ENCODE measurements at regions of chr16 and their contacts with region 1.

Region 1: DNA sequence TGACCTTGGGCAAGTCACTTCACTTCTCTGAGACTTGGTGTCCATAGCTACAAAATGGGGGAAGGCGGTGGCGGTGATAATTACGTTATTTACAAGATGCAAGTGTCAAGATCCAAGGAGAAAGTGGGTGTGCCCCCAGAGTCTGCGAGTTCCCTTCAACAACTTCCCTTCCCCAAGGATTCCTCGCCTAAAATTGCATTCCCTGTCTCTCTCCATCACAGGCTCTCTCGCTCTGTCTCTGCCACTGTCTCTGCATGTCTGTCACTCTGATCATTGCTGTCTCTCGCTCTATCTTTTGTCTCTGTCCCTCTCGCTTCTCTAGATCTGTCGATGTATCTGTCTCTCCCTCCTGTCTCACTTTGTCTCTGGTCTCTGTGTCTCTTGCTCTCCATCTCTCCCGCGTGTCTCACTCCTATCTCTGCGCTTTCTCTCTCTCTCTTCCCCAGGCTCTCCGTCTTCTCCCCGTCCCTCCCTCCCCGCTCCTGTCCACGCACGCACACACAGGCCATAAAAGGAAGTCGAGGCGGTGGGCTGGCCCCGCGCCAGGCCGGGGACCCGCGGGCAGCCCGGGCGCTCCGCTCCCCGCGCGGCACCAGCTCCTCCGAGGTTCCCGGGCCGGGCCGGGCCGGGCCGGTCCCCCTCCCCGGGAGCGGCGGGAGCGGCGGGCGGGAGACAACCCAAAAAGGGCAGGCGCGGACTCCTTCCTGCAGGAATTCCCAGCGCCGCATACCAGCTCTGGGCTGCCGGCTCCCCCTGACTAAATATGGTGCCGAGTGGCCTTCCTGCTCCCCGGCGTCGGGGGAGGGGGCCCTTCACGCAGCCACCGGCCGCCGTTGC is 1.1 kb upstream of the MYH11 start:
- DNase-seq: peak in 2 of 35 experiments; percentile 3
- ATAC-seq: no peak
- H3K4me3 ChIP-seq: no peak overlapping the region
- H3K4me3 Mint-ChIP-seq: peak overlapping the region in 2 of 3 donors; percentile 2 to 68
- H3K27ac ChIP-seq: no peak overlapping the region
- H3K27ac Mint-ChIP-seq: no peak overlapping the region
- H3K4me1 ChIP-seq: peaks cover 0 to 13% of the 10 kb centered on the region in 2 experiments
- H3K4me1 Mint-ChIP-seq: peaks cover 7 to 9% (median 8%) of the 10 kb centered on the region in 3 donors
- H3K27me3 ChIP-seq: peaks cover 11 to 33% of the 10 kb centered on the region in 2 experiments
- H3K27me3 Mint-ChIP-seq: peaks cover 21 to 40% of the 10 kb centered on the region in 2 donors

Region 2: DNA sequence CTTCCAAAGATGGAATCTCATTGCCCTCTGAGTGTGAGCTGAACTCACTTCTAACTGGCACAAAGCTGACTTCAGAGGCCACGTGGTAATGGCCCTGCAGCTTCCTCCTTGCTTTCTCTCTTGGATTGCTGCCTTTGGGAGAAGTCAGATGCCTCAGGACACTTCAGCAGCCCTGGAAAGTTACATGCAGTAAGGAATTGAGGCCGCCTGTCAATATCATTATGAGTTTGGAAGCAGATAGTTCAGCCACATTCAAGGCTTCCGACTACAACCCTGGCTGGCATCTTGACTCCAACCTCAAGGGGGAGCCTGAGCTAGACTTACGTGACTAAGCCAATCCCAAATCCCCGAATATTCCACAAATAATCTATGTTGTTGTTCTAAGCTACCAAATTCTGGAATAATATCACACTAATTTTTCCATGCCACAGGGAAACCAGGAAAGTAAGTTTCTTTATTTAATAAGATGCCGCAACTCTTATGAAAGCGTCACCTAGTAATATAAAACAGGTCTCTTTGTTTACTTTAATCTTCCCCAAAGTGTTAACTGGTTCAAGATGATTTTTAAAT is 16.9 kb after region 1 on chr16:
- CTCF ChIA-PET with region 1: no interaction called
- POLR2A ChIA-PET with region 1: no interaction called
- DNase-seq: peak in 1 of 35 experiments; percentile 37
- ATAC-seq: no peak
- H3K4me3 ChIP-seq: no peak overlapping the region
- H3K4me3 Mint-ChIP-seq: no peak overlapping the region
- H3K27ac ChIP-seq: no peak overlapping the region
- H3K27ac Mint-ChIP-seq: no peak overlapping the region
- H3K4me1 ChIP-seq: peaks cover 0 to 2% of the 10 kb centered on the region in 2 experiments
- H3K4me1 Mint-ChIP-seq: peaks cover 3 to 5% (median 4%) of the 10 kb centered on the region in 3 donors
- H3K27me3 ChIP-seq: no peaks in the 10 kb centered on the region
- H3K27me3 Mint-ChIP-seq: no peaks in the 10 kb centered on the region

Region 3: GRCh38 chr16:16082255-16082654 is 224.3 kb after region 1 on chr16:
- CTCF ChIA-PET with region 1: no interaction called
- POLR2A ChIA-PET with region 1: interaction called in 1 of 2 experiments, 11 read pairs
- DNase-seq: no peak
- ATAC-seq: no peak
- H3K4me3 ChIP-seq: no peak overlapping the region
- H3K4me3 Mint-ChIP-seq: no peak overlapping the region
- H3K27ac ChIP-seq: no peak overlapping the region
- H3K27ac Mint-ChIP-seq: no peak overlapping the region
- H3K4me1 ChIP-seq: peaks cover 0 to 2% of the 10 kb centered on the region in 2 experiments
- H3K4me1 Mint-ChIP-seq: no peaks in the 10 kb centered on the region
- H3K27me3 ChIP-seq: no peaks in the 10 kb centered on the region
- H3K27me3 Mint-ChIP-seq: no peaks in the 10 kb centered on the region

Region 4: DNA sequence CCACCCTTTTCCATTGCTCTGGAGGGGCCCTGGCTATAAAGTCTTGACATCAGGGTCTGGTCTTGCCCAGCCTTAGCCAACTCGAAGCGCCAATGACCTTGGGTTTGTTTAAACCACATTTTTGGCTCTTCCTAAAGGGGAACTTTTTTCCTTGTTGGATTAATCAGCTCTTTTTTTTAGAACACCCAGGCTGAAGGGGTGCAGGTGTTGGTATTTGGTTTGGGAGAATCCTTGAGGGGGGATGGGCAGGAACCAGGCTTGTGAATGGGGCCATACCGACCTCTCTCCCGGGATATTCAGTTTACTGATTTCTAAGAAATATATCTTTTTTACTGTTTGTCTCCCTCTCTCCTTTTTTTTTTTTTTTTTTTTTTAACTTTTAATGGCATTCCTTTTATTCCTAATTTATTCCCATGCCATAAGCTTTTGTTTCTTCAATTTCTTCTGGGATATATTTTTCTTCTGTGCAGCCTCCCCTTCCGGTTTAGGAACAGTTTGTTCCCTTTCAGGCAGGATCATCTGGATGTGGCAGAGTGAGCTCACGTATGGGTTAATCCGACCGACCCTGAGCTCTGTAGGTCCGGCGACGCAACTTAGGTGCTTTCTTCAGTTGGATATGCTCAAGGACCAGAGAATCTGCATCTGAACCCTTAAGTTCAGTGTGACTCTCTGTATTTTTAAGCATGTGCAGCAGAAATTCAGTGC is 235.8 kb after region 1 on chr16:
- CTCF ChIA-PET with region 1: interaction called in 1 of 2 experiments, 11 read pairs
- POLR2A ChIA-PET with region 1: no interaction called
- DNase-seq: no peak
- ATAC-seq: no peak
- H3K4me3 ChIP-seq: no peak overlapping the region
- H3K4me3 Mint-ChIP-seq: no peak overlapping the region
- H3K27ac ChIP-seq: no peak overlapping the region
- H3K27ac Mint-ChIP-seq: no peak overlapping the region
- H3K4me1 ChIP-seq: no peaks in the 10 kb centered on the region
- H3K4me1 Mint-ChIP-seq: no peaks in the 10 kb centered on the region
- H3K27me3 ChIP-seq: no peaks in the 10 kb centered on the region
- H3K27me3 Mint-ChIP-seq: no peaks in the 10 kb centered on the region